MCF 10A (cell line): ENCODE measurements at regions of chr13 and their contacts with region 1.

Region 1: DNA sequence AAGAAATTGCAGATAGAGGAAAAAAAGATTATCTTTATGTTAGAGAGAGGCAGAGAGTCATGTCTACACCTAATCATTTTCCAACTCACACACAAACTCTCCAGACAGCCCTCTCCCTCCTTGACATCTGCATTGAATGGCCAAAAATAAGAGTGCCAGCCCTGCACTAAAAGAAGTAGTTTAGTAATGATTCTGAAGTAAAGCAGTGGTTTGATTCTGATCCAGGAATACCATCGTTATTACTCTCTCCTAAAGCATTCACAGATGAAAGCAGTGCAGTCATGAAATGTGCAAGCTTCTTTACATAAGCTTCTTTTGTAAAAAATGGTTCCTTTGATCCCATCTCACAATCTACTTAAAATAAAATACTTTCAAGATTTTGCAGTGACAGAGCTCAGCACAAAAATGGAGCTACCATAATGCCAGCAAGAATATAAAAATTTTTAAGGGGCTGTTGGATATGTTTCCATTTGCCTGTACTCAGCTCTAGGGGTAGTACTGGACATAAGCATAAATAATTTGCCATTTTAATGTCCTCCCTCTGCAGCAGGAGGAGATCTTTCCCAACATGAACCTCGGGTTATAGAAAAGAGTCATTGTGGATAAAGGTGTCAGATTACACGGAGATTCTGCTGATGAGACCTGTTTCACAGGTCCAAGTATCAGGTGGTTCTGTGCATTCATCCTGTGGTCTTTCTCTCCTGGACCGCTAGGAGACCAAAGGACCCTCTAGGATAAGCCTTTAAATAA is 406.3 kb downstream of the DCT start:
- DNase-seq: peak; percentile 26
- H3K4me3 Mint-ChIP-seq: no peak overlapping the region
- H3K27ac Mint-ChIP-seq: peak overlapping the region; percentile 2
- H3K4me1 Mint-ChIP-seq: peaks cover 8% of the 10 kb centered on the region
- H3K27me3 Mint-ChIP-seq: no peaks in the 10 kb centered on the region
- CTCF ChIP-seq: no peak

Region 2: DNA sequence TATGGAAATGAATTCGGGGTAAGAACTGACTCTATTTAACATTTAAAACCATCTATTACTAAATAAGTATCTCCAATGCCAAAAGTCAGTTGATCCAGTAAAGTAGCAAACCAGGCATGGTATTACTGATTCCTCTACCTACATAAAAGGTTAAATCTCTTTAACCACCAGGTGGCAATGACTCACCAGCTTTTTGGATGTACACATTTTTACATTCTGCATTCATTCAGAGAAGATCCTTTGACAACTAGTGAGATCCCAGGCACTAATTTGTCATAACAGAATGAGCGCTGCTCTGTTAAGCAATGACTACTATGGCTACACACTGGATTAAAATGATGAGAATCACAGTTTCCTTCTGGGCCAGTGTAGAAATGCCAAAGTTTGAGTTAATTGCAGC is 1176.3 kb before region 1 on chr13:
- CTCF ChIA-PET with region 1: no interaction called
- POLR2A ChIA-PET with region 1: no interaction called
- intact Hi-C with region 1: loop called (anchors 10 kb)
- DNase-seq: peak; percentile 64
- H3K4me3 Mint-ChIP-seq: no peak overlapping the region
- H3K27ac Mint-ChIP-seq: no peak overlapping the region
- H3K4me1 Mint-ChIP-seq: peaks cover 13% of the 10 kb centered on the region
- H3K27me3 Mint-ChIP-seq: no peaks in the 10 kb centered on the region
- CTCF ChIP-seq: peak; percentile 28